Gastrocnemius medialis (tissue), 4 donors: ENCODE measurements at regions of chr2 and their contacts with region 1.

Region 1: GRCh38 chr2:241609859-241610793 is 26.8 kb downstream of the THAP4 start:
- DNase-seq: peak; percentile 55 to 78
- ATAC-seq: peak; percentile 86
- H3K4me3 ChIP-seq: peak overlapping the region; percentile 67 to 80 (median 70)
- H3K27ac ChIP-seq: peak overlapping the region; percentile 72 to 85 (median 78)
- H3K4me1 ChIP-seq: peaks cover 7 to 14% of the 10 kb centered on the region in 2 donors
- H3K27me3 ChIP-seq: no peaks in the 10 kb centered on the region
- CTCF ChIP-seq: peak; percentile 48 to 87 (median 56)
- POLR2A ChIP-seq: peak; percentile 23 to 47

Region 2: DNA sequence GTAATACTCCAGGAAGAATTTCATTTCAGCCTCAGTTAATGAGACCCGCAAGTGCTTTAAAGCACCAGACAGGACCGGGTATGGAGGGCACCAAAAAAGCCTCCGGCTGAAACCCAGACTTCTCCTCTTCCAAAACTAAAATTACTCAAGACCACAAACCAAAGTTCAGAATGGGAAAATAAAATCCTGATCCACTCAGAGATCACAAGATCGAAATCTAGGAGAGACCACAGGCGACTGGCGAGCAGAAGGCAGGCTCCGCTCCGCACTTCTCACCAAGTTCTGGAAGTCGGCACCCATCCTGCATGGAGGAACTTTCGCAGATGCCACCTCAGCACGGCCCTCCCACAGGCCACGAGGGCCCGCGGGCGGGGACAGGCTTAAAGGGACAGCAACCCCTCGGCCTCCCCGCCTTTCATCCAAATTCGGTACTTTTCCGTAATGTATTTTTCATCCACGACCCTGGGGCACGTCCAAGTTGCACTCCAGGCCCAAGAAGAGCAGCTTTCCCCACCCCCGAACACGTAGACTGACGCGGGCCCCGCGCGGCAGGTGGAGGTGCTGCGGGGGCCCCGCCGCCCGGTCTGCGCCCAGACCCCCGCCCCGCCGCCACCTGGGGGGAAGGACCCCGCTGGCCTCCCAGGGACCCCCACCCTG is 338.4 kb before region 1 on chr2:
- in situ Hi-C with region 1: no loop called
- intact Hi-C with region 1: loop called (anchors 5 kb)
- DNase-seq: peak; percentile 80 to 81
- ATAC-seq: peak; percentile 88 to 90
- H3K4me3 ChIP-seq: peak overlapping the region; percentile 67 to 93 (median 73)
- H3K27ac ChIP-seq: peak overlapping the region; percentile 83 to 97 (median 92)
- H3K4me1 ChIP-seq: peaks cover 42 to 43% of the 10 kb centered on the region in 2 donors
- H3K27me3 ChIP-seq: no peaks in the 10 kb centered on the region
- CTCF ChIP-seq: no peak
- POLR2A ChIP-seq: peak in 1 of 2 donors; percentile 46

Region 3: GRCh38 chr2:241577413-241578122 is 32.6 kb before region 1 on chr2:
- in situ Hi-C with region 1: no loop called
- intact Hi-C with region 1: no loop called
- DNase-seq: no peak
- ATAC-seq: no peak
- H3K4me3 ChIP-seq: no peak overlapping the region
- H3K27ac ChIP-seq: no peak overlapping the region
- H3K4me1 ChIP-seq: no peaks in the 10 kb centered on the region
- H3K27me3 ChIP-seq: no peaks in the 10 kb centered on the region
- CTCF ChIP-seq: no peak
- POLR2A ChIP-seq: no peak